ENCODE measurements at regions of chr2 and their contacts with region 1.

Region 1: DNA sequence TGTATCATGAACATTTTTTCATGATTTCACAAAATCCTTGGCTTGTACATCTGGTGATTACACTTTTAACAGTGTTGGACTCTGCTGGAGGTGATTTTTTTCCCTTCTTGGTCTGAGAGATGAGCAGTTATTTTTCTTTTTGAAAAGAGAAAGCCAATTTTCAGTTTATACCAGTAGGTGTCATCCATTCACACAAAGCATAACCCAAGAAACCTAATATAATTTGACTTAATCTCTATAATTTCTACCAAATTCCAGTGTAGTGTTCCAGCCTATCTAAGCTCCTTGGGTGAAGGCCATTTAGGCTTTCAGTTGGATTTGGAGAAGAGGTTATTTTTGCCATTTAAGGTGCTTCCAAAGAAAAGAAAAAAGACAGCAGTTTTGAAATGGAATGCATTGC is 7.7 kb upstream of the ICOS start:
- DNase-seq: peak in 1 of 5 donors; percentile 45
- H3K4me3 ChIP-seq: no peak overlapping the region
- H3K4me3 Mint-ChIP-seq: no peak overlapping the region
- H3K27ac ChIP-seq: no peak overlapping the region
- H3K27ac Mint-ChIP-seq: peak overlapping the region in 1 of 7 donors; percentile 22
- H3K4me1 ChIP-seq: peaks cover 20% of the 10 kb centered on the region
- H3K4me1 Mint-ChIP-seq: peaks cover 15 to 41% (median 31%) of the 10 kb centered on the region in 4 donors
- H3K27me3 ChIP-seq: no peaks in the 10 kb centered on the region
- H3K27me3 Mint-ChIP-seq: peaks cover 1 to 2% of the 10 kb centered on the region in 2 donors

Region 2: GRCh38 chr2:203918264-203918663 is 10.6 kb before region 1 on chr2:
- CTCF ChIA-PET with region 1: interaction called, 13 read pairs
- POLR2A ChIA-PET with region 1: no interaction called
- intact Hi-C with region 1: no loop called
- DNase-seq: no peak
- H3K4me3 ChIP-seq: no peak overlapping the region
- H3K4me3 Mint-ChIP-seq: no peak overlapping the region
- H3K27ac ChIP-seq: no peak overlapping the region
- H3K27ac Mint-ChIP-seq: no peak overlapping the region
- H3K4me1 ChIP-seq: peaks cover 9% of the 10 kb centered on the region
- H3K4me1 Mint-ChIP-seq: peaks cover 6 to 27% (median 15%) of the 10 kb centered on the region in 4 donors
- H3K27me3 ChIP-seq: no peaks in the 10 kb centered on the region
- H3K27me3 Mint-ChIP-seq: no peaks in the 10 kb centered on the region

Region 3: GRCh38 chr2:204072443-204073324 is 143.8 kb after region 1 on chr2:
- CTCF ChIA-PET with region 1: interaction called, 11 read pairs
- POLR2A ChIA-PET with region 1: no interaction called
- intact Hi-C with region 1: no loop called
- DNase-seq: peak in 4 of 5 donors; percentile 34 to 45 (median 36)
- H3K4me3 ChIP-seq: no peak overlapping the region
- H3K4me3 Mint-ChIP-seq: no peak overlapping the region
- H3K27ac ChIP-seq: no peak overlapping the region
- H3K27ac Mint-ChIP-seq: no peak overlapping the region
- H3K4me1 ChIP-seq: no peaks in the 10 kb centered on the region
- H3K4me1 Mint-ChIP-seq: no peaks in the 10 kb centered on the region
- H3K27me3 ChIP-seq: no peaks in the 10 kb centered on the region
- H3K27me3 Mint-ChIP-seq: no peaks in the 10 kb centered on the region